OCI-LY7 (cell line): ENCODE measurements at regions of chr9 and their contacts with region 1.

Region 1: DNA sequence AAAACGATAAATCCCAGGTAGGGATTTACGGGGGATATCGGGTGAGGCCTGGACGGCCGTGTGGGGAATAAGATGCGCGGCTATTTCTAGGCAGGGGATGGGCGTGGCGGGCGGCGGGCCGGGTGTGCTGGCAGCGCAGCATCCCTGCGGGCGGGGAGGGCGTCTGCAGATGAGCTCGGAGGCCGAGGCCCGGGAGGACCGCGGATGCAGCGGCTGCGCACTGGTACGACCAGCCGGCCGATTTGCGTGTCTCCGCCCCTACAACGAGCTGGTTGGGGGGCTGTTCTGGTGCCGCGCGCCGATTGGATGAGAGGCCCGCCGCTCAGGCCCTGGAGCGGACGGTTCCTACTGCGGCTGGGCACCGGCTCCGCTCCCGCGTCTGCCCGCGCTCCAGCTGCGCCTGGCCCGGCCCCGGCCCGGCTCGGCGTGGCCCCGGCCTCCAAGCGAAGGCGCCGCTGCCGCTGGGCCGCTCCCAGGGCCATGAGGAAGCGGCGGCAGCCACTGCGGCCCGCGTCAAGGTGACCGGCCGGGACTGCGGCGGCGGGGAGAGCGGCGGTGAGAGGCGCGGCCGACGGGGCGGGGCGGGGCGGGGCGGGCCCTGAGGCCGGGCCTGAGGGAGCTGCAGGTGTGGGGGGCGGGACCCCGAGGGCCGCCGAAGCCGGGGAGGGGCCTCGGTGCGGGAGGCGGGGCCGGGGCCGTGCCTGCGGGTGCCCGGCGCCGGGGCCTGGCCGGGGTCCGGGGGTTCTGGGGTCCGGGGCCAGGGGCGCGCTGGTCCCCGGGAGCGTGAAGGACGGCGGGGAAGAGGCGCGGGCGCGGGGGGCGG is at the start of gene RALGPS1:
- DNase-seq: peak; percentile 95
- H3K4me3 ChIP-seq: peak within 1 kb of the TSS; percentile 69
- H3K27ac ChIP-seq: no peak within 1 kb of the TSS
- H3K4me1 ChIP-seq: peaks cover 7% of the 10 kb centered on the region
- CTCF ChIP-seq: no peak
- total RNA-seq, gene RALGPS1: 8.3 and 14.4 TPM in 2 replicates

Region 2: GRCh38 chr9:126804696-126805545 is 109.7 kb before region 1 on chr9 and contains the start of gene ZBTB43:
- CTCF ChIA-PET with region 1: interaction called, 3 read pairs
- POLR2A ChIA-PET with region 1: no interaction called
- intact Hi-C with region 1: loop called (anchors 10 kb)
- DNase-seq: peak; percentile 95
- H3K4me3 ChIP-seq: peak within 1 kb of the TSS; percentile 82
- H3K27ac ChIP-seq: peak within 1 kb of the TSS; percentile 50
- H3K4me1 ChIP-seq: peaks cover 23% of the 10 kb centered on the region
- CTCF ChIP-seq: no peak
- total RNA-seq, gene ZBTB43: 3.3 and 4.1 TPM in 2 replicates

Region 3: DNA sequence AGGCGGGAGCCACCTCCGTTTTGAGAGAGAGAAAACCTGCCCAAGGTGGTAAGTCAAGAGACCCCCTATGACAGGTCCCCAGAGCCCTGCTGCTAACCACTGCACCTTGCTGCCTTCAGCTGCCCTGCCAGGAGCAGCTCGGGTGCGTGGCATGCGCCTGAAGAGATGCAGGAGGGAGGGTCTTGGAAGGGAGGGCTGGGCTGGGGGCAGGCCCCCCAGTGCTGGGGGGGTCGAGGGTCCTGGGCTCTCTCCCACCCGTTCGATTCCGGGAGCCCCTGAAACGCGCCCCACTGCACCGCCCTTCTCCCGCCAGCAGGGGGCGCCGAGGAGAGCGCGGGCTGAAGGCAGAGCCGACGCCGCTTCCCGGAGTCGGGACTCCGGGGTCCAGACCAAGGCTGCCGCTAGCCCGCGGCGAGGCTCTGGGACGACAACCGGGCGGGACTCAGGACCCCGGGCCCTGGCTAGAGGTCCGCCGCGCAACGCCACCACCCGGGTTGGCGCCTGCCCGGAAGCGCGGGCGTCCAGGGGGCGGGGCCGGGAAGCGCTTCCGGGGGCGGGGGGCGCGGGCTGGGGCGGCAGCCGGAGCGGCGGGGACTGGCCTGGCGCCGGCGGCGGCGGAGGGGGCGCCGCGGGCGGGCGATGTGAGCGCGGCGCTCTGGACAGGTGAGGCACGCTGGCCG is 54.5 kb before region 1 on chr9 and contains the start of gene ZBTB34:
- CTCF ChIA-PET with region 1: interaction called, 7 read pairs
- POLR2A ChIA-PET with region 1: interaction called, 3 read pairs
- intact Hi-C with region 1: loop called (anchors 5 kb)
- DNase-seq: peak; percentile 80
- H3K4me3 ChIP-seq: peak within 1 kb of the TSS; percentile 81
- H3K27ac ChIP-seq: peak within 1 kb of the TSS; percentile 54
- H3K4me1 ChIP-seq: peaks cover 33% of the 10 kb centered on the region
- CTCF ChIP-seq: peak; percentile 95
- total RNA-seq, gene ZBTB34: 6.5 and 7.5 TPM in 2 replicates